Naive thymus-derived CD4-positive, alpha-beta T cell (primary cell): ENCODE measurements at regions of chr4 and their contacts with region 1.

Region 1: DNA sequence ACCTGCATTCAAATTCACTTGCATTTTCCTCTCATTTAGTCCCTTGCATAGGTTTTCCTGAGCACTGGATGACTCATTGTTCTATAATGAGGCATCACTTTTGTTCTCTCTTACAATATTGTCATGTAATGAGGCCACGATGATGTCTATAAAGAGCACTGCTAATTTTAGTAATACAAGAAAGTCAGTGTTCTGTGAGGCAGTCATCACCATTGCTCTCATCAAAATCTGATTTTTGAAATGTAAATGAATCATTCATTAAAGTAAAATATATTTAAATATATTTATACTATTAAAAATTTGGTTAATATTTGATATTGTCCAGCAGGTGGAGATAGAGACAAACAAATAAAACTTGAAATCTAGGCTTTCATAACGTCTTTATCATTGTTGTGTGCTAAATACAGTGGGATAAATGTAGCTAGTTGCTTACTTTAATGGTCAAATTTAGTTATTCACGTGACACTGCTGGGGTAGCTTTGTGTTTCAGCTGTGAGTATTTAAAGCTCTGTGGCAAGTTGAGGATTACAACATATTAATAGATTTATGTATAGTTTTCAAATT is 15.4 kb downstream of the HMGB2 start:
- DNase-seq: peak in 4 of 9 donors; percentile 17 to 43 (median 34)
- ATAC-seq: peak; percentile 64
- H3K4me3 ChIP-seq: no peak overlapping the region
- H3K4me3 Mint-ChIP-seq: no peak overlapping the region
- H3K27ac ChIP-seq: no peak overlapping the region
- H3K27ac Mint-ChIP-seq: no peak overlapping the region
- H3K4me1 ChIP-seq: no peaks in the 10 kb centered on the region
- H3K4me1 Mint-ChIP-seq: peaks cover 0 to 5% (median 0%) of the 10 kb centered on the region in 7 donors
- H3K27me3 ChIP-seq: no peaks in the 10 kb centered on the region
- H3K27me3 Mint-ChIP-seq: no peaks in the 10 kb centered on the region

Region 2: DNA sequence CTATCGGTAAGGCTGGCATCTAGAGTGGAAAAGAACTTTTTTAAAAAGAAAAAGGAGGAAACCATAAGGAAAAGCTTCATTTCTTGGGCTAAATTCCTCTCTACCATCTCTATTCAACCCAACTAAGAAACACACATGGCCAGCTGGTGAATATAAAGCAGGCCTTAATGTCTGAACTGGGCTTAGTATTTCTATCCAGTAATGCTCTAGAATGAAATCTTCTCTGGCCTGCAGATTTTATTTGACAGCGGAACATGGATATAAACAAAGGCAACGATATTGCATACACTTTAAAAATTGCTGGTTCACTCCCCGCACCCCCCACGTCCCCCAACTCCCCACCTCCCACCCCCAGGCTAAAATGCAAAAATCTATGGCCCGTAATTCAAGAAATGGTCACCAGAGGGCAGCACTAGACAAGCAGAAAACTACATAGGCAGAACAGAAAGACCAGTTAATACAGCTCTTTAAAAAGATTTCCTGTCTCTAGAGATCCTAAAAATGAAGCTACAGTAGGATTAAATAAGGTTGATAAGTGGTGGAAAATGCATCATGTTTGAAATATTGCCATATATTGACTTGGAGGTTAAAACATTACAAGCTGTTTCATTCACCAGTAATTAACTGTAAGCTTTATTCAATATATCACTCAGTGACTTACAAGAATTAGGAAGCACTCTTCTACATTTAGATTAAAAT is 305.3 kb before region 1 on chr4:
- CTCF ChIA-PET with region 1: interaction called, 4 read pairs
- POLR2A ChIA-PET with region 1: no interaction called
- intact Hi-C with region 1: loop called in 1 of 2 experiments (anchors 1 kb)
- DNase-seq: peak; percentile 12 to 64 (median 50)
- ATAC-seq: peak; percentile 77
- H3K4me3 ChIP-seq: no peak overlapping the region
- H3K4me3 Mint-ChIP-seq: no peak overlapping the region
- H3K27ac ChIP-seq: no peak overlapping the region
- H3K27ac Mint-ChIP-seq: no peak overlapping the region
- H3K4me1 ChIP-seq: no peaks in the 10 kb centered on the region
- H3K4me1 Mint-ChIP-seq: peaks cover 0 to 4% (median 0%) of the 10 kb centered on the region in 7 donors
- H3K27me3 ChIP-seq: no peaks in the 10 kb centered on the region
- H3K27me3 Mint-ChIP-seq: peaks cover 0 to 5% (median 0%) of the 10 kb centered on the region in 5 donors

Region 3: DNA sequence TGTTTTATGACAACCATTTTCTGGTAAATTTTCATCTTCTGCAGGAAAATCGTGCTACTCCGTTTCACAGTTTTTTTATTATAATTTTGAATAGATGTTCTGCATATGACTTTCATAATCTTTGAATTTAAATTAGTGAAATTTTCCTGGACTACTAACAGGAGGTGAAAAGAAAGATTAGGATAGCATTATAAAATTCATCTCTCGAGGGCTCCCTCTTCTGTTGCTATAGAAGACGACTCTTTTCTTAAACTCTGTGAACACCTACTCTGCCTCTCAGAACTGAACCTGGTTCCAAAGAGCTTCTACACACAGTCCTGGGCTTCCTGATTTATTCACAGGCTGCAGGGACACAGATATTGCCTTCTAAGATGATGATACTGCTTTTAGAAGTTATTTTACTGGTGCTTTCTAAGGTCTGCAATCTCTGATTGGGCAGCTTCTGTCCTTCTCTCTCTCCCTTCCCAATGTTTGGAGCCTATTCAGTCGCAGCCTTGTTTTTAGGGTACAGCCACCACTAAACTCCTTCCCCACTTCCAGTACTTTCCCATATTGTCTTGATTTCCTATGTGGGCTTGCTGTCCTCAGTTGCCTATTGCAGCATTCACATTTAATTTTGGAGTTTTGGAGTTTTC is 42.0 kb after region 1 on chr4:
- CTCF ChIA-PET with region 1: interaction called, 4 read pairs
- POLR2A ChIA-PET with region 1: no interaction called
- intact Hi-C with region 1: loop called (anchors 1 kb)
- DNase-seq: no peak
- ATAC-seq: no peak
- H3K4me3 ChIP-seq: no peak overlapping the region
- H3K4me3 Mint-ChIP-seq: no peak overlapping the region
- H3K27ac ChIP-seq: no peak overlapping the region
- H3K27ac Mint-ChIP-seq: no peak overlapping the region
- H3K4me1 ChIP-seq: no peaks in the 10 kb centered on the region
- H3K4me1 Mint-ChIP-seq: peaks cover 0 to 17% (median 6%) of the 10 kb centered on the region in 7 donors
- H3K27me3 ChIP-seq: no peaks in the 10 kb centered on the region
- H3K27me3 Mint-ChIP-seq: peaks cover 0 to 8% (median 6%) of the 10 kb centered on the region in 5 donors

Region 4: DNA sequence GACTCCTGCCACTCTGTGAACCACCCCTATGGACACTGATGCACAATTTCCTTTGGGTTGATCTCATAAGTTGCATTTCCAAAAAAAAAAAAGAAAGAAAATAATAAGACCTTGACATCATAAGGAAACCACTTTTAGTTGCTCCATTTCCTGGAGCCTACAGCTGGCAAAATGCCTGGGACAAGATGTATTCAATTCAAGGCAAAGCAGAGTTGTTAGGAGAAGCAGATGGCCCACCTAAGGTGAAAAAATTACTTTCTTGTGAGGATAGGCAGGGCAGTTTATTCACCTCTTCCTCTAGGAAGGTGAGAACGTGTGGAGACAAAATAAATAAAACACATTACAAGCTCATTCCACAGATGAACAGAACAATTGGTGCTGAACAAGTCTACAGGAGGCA is 94.3 kb after region 1 on chr4:
- CTCF ChIA-PET with region 1: interaction called, 48 read pairs
- POLR2A ChIA-PET with region 1: no interaction called
- intact Hi-C with region 1: loop called (anchors 1 kb)
- DNase-seq: no peak
- ATAC-seq: no peak
- H3K4me3 ChIP-seq: no peak overlapping the region
- H3K4me3 Mint-ChIP-seq: no peak overlapping the region
- H3K27ac ChIP-seq: no peak overlapping the region
- H3K27ac Mint-ChIP-seq: no peak overlapping the region
- H3K4me1 ChIP-seq: no peaks in the 10 kb centered on the region
- H3K4me1 Mint-ChIP-seq: peaks cover 0 to 9% (median 0%) of the 10 kb centered on the region in 7 donors
- H3K27me3 ChIP-seq: no peaks in the 10 kb centered on the region
- H3K27me3 Mint-ChIP-seq: peaks cover 0 to 6% (median 0%) of the 10 kb centered on the region in 5 donors

Region 5: GRCh38 chr4:173494013-173494970 is 175.6 kb after region 1 on chr4:
- CTCF ChIA-PET with region 1: interaction called, 3 read pairs
- POLR2A ChIA-PET with region 1: no interaction called
- intact Hi-C with region 1: loop called (anchors 1 to 2 kb)
- DNase-seq: peak in 8 of 9 donors; percentile 43 to 71 (median 56)
- ATAC-seq: peak; percentile 96
- H3K4me3 ChIP-seq: peak overlapping the region; percentile 44
- H3K4me3 Mint-ChIP-seq: peak overlapping the region; percentile 74 to 92 (median 85)
- H3K27ac ChIP-seq: no peak overlapping the region
- H3K27ac Mint-ChIP-seq: peak overlapping the region in 1 of 9 donors; percentile 50
- H3K4me1 ChIP-seq: peaks cover 3 to 9% of the 10 kb centered on the region in 2 donors
- H3K4me1 Mint-ChIP-seq: peaks cover 9 to 35% (median 15%) of the 10 kb centered on the region in 7 donors
- H3K27me3 ChIP-seq: no peaks in the 10 kb centered on the region
- H3K27me3 Mint-ChIP-seq: peaks cover 40 to 71% (median 50%) of the 10 kb centered on the region in 5 donors

Region 6: DNA sequence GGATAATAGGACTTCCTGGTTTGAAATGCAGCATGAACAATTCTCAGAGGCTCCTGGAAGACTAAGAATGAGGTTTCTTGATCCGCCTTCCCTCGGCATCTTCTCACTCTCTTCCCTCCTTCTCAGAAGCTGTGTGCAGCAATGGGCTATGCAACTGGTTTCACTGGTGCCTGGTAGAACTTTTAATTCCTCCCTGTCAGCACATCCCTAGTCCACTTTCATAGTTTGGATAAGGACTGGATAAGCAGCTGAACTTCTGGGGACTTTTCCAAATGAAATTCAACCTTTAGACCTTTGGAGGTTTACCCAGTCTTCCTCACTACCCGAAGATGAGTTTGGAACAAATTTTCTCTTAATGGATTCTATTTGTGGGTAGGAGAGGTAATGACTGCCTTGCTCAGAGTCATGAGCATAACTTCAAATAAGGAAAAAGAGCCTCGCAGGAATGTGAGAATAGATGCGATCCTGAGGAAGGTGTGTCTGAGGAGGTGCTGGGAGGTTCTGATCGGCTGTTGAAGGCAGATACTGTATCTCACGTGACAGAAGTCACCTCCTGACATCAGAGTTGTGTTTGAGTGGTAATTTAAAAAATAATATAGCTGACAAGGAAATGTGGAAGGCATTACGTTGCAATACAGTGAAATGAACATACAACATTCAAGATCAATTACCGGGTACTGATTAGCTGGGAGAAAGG is 267.3 kb after region 1 on chr4:
- CTCF ChIA-PET with region 1: no interaction called
- POLR2A ChIA-PET with region 1: no interaction called
- intact Hi-C with region 1: no loop called
- DNase-seq: no peak
- ATAC-seq: no peak
- H3K4me3 ChIP-seq: no peak overlapping the region
- H3K4me3 Mint-ChIP-seq: no peak overlapping the region
- H3K27ac ChIP-seq: no peak overlapping the region
- H3K27ac Mint-ChIP-seq: no peak overlapping the region
- H3K4me1 ChIP-seq: no peaks in the 10 kb centered on the region
- H3K4me1 Mint-ChIP-seq: no peaks in the 10 kb centered on the region
- H3K27me3 ChIP-seq: no peaks in the 10 kb centered on the region
- H3K27me3 Mint-ChIP-seq: peaks cover 0 to 45% (median 30%) of the 10 kb centered on the region in 5 donors

Region 7: DNA sequence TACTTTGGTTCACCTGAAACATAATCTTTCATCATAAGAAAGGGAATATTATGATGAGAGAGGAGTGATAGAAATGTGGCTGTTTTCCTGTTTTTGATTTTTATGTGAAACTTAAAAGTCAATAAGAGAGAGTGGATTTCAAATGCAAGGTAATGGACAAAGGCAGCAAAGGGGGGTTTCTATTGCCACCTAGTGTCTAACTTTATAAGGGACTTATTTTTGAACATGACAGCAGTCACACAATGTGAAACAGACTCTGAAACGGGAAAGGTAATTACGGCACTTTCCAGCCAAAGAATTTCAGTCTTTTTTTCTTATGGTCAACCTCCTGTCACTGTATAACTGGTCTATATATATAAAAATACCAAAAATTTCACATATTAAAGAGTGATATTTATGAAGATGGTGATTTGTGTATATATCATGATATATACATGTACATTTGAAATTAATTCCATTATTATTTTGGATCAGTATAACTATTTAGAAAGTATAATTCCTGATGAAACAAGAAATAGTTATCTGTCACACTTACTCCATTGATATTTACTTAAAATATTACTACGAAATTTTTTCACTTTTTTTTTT is 837.6 kb after region 1 on chr4:
- CTCF ChIA-PET with region 1: no interaction called
- POLR2A ChIA-PET with region 1: no interaction called
- intact Hi-C with region 1: loop called in 1 of 2 experiments (anchors 2 kb)
- DNase-seq: peak in 3 of 9 donors; percentile 6 to 18 (median 14)
- ATAC-seq: peak; percentile 31
- H3K4me3 ChIP-seq: no peak overlapping the region
- H3K4me3 Mint-ChIP-seq: no peak overlapping the region
- H3K27ac ChIP-seq: no peak overlapping the region
- H3K27ac Mint-ChIP-seq: no peak overlapping the region
- H3K4me1 ChIP-seq: no peaks in the 10 kb centered on the region
- H3K4me1 Mint-ChIP-seq: no peaks in the 10 kb centered on the region
- H3K27me3 ChIP-seq: no peaks in the 10 kb centered on the region
- H3K27me3 Mint-ChIP-seq: peaks cover 2 to 44% (median 33%) of the 10 kb centered on the region in 5 donors